CD14-positive monocyte (primary cell): ENCODE measurements at regions of chr5 and their contacts with region 1.

Region 1: GRCh38 chr5:147822686-147823491 is 8.6 kb downstream of the SPINK1 start:
- DNase-seq: peak; percentile 68 to 80 (median 75)
- H3K4me3 ChIP-seq: no peak overlapping the region
- H3K4me3 Mint-ChIP-seq: no peak overlapping the region
- H3K27ac ChIP-seq: no peak overlapping the region
- H3K27ac Mint-ChIP-seq: peak overlapping the region in 1 of 7 donors; percentile 8
- H3K4me1 ChIP-seq: no peaks in the 10 kb centered on the region
- H3K4me1 Mint-ChIP-seq: peaks cover 13% of the 10 kb centered on the region
- H3K27me3 ChIP-seq: no peaks in the 10 kb centered on the region
- H3K27me3 Mint-ChIP-seq: peaks cover 0 to 3% (median 0%) of the 10 kb centered on the region in 3 donors
- CTCF ChIP-seq: peak; percentile 97

Region 2: GRCh38 chr5:147628058-147628895 is 194.6 kb before region 1 on chr5:
- intact Hi-C with region 1: loop called (anchors 1 to 2 kb)
- DNase-seq: peak; percentile 42 to 72 (median 60)
- H3K4me3 ChIP-seq: no peak overlapping the region
- H3K4me3 Mint-ChIP-seq: no peak overlapping the region
- H3K27ac ChIP-seq: no peak overlapping the region
- H3K27ac Mint-ChIP-seq: no peak overlapping the region
- H3K4me1 ChIP-seq: no peaks in the 10 kb centered on the region
- H3K4me1 Mint-ChIP-seq: peaks cover 2% of the 10 kb centered on the region
- H3K27me3 ChIP-seq: no peaks in the 10 kb centered on the region
- H3K27me3 Mint-ChIP-seq: no peaks in the 10 kb centered on the region
- CTCF ChIP-seq: peak; percentile 86

Region 3: DNA sequence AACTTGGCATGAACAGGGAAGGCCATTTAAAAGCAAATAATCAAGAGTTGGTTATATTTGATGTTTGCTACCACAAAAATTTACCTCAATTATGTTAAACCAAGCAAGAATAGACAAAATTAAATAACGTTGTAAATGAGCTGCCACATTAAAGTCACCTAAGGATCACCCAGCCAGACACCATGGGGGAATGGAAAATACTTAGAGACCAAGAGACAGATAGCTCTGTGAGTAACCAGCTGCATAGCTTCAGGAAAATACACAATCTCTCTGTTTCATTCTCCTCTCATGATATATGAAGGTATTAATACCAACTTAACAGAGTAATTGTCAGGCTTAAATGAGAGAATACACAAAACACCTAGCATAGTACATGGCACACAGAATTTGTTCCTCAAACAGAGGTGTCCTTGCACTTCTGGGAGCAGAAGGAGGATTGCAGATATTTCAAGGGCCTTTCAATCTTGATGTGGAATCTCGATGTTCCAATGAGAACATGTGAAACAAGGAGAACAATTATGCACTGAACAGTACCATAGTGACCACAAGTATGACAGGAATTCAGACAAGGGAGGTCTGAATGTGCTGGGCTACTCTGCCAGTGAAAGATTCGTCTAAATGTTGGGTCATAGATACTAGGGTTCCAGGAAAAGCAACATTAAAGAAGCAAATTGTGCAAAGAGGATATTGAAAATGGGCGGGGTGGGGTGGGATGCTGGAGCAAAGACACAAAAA is 58.9 kb before region 1 on chr5:
- intact Hi-C with region 1: loop called in 1 of 2 experiments (anchors 10 kb)
- DNase-seq: no peak
- H3K4me3 ChIP-seq: no peak overlapping the region
- H3K4me3 Mint-ChIP-seq: no peak overlapping the region
- H3K27ac ChIP-seq: no peak overlapping the region
- H3K27ac Mint-ChIP-seq: no peak overlapping the region
- H3K4me1 ChIP-seq: no peaks in the 10 kb centered on the region
- H3K4me1 Mint-ChIP-seq: no peaks in the 10 kb centered on the region
- H3K27me3 ChIP-seq: no peaks in the 10 kb centered on the region
- H3K27me3 Mint-ChIP-seq: no peaks in the 10 kb centered on the region
- CTCF ChIP-seq: no peak

Region 4: GRCh38 chr5:148042881-148043280 is 220.0 kb after region 1 on chr5:
- intact Hi-C with region 1: no loop called
- DNase-seq: no peak
- H3K4me3 ChIP-seq: no peak overlapping the region
- H3K4me3 Mint-ChIP-seq: no peak overlapping the region
- H3K27ac ChIP-seq: no peak overlapping the region
- H3K27ac Mint-ChIP-seq: no peak overlapping the region
- H3K4me1 ChIP-seq: no peaks in the 10 kb centered on the region
- H3K4me1 Mint-ChIP-seq: no peaks in the 10 kb centered on the region
- H3K27me3 ChIP-seq: no peaks in the 10 kb centered on the region
- H3K27me3 Mint-ChIP-seq: no peaks in the 10 kb centered on the region
- CTCF ChIP-seq: no peak